Motor neuron (in vitro differentiated cells): ENCODE measurements at regions of chr3 and their contacts with region 1.

Region 1: GRCh38 chr3:104273046-104273649 is 1093.6 kb upstream of the ALCAM start:
- ATAC-seq: peak in 1 of 8 experiments; percentile 27
- H3K4me3 ChIP-seq: no peak overlapping the region
- H3K27ac ChIP-seq: no peak overlapping the region
- H3K4me1 ChIP-seq: no peaks in the 10 kb centered on the region

Region 2: GRCh38 chr3:103470498-103470897 is 802.6 kb before region 1 on chr3:
- in situ Hi-C with region 1: no loop called
- ATAC-seq: peak in 1 of 8 experiments; percentile 54
- H3K4me3 ChIP-seq: no peak overlapping the region
- H3K27ac ChIP-seq: no peak overlapping the region
- H3K4me1 ChIP-seq: no peaks in the 10 kb centered on the region

Region 3: GRCh38 chr3:104460477-104461406 is 187.6 kb after region 1 on chr3:
- in situ Hi-C with region 1: loop called in 1 of 9 experiments (anchors 10 kb)
- ATAC-seq: peak in 4 of 8 experiments; percentile 47 to 81 (median 74)
- H3K4me3 ChIP-seq: no peak overlapping the region
- H3K27ac ChIP-seq: no peak overlapping the region
- H3K4me1 ChIP-seq: no peaks in the 10 kb centered on the region

Region 4: GRCh38 chr3:104596551-104596950 is 323.4 kb after region 1 on chr3:
- in situ Hi-C with region 1: loop called in 1 of 9 experiments (anchors 10 kb)
- ATAC-seq: peak; percentile 63 to 89 (median 76)
- H3K4me3 ChIP-seq: no peak overlapping the region
- H3K27ac ChIP-seq: no peak overlapping the region
- H3K4me1 ChIP-seq: peaks cover 0 to 6% of the 10 kb centered on the region in 2 donors